Activated CD4-positive, alpha-beta T cell treated with anti-CD3 and anti-CD28 coated beads for 36 hours (primary cell): ENCODE measurements at regions of chr11 and their contacts with region 1.

Region 1: DNA sequence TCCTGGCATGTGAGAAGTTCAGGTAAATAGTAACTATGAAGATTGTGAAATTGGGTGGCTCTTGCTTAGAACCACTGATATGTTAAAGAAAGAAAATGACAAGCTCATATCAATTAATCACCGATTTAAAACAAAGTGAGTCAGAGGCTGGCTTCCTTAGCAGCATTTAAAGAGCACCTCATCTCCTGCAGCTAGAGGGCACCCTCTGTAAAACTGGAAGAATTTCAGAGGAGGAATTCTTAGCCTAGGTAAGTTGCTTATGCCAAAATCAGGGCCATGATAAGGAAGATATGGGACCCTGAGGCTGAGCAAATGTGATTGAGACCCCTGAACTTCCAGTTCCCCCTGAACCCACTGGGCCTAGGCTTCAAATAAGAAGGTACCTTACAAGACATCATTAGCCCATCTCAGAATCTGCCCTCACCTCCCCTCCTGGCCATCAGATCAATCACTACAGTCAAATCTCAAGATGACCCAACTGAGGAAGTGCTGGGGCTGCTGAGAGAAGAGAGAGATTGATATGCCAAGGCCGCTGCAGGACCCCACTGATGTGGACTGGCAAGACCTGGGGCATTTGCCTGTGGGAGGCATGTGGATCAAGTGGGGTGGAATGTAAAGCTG is 8.6 kb upstream of the CD3E start:
- DNase-seq: peak; percentile 62
- ATAC-seq: peak; percentile 85
- H3K4me3 Mint-ChIP-seq: no peak overlapping the region
- H3K27ac Mint-ChIP-seq: peak overlapping the region; percentile 68
- H3K4me1 Mint-ChIP-seq: peaks cover 16% of the 10 kb centered on the region
- H3K27me3 Mint-ChIP-seq: no peaks in the 10 kb centered on the region

Region 2: GRCh38 chr11:118247047-118247446 is 48.9 kb before region 1 on chr11:
- CTCF ChIA-PET with region 1: interaction called, 10 read pairs
- POLR2A ChIA-PET with region 1: no interaction called
- intact Hi-C with region 1: no loop called
- DNase-seq: no peak
- ATAC-seq: peak; percentile 69
- H3K4me3 Mint-ChIP-seq: peak overlapping the region; percentile 11
- H3K27ac Mint-ChIP-seq: peak overlapping the region; percentile 78
- H3K4me1 Mint-ChIP-seq: peaks cover 71% of the 10 kb centered on the region
- H3K27me3 Mint-ChIP-seq: no peaks in the 10 kb centered on the region

Region 3: DNA sequence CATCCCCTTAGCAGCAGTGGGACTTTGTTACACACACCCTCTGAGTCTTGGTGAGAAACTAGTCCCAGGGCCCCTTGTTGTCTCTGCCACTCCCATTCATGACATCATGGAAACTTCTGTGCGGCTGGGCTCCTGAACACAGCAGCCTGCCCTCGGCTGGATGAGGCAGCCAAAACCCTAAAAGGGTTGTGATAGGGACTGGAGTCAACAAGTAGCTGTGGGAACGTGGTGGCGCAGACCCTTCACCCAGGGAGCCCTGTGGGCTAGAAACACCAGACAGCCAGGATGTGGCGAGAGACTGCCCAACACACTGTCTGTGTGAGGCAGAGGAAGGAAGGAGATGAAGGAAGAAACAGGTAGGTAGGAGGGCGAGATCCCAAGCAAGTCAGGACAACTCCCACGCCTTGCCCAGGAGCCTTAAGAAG is 42.7 kb after region 1 on chr11:
- CTCF ChIA-PET with region 1: interaction called, 11 read pairs
- POLR2A ChIA-PET with region 1: interaction called, 4 read pairs
- intact Hi-C with region 1: no loop called
- DNase-seq: peak; percentile 94
- ATAC-seq: peak; percentile 63
- H3K4me3 Mint-ChIP-seq: peak overlapping the region; percentile 83
- H3K27ac Mint-ChIP-seq: peak overlapping the region; percentile 100
- H3K4me1 Mint-ChIP-seq: peaks cover 45% of the 10 kb centered on the region
- H3K27me3 Mint-ChIP-seq: no peaks in the 10 kb centered on the region

Region 4: GRCh38 chr11:118353084-118353710 is 57.3 kb after region 1 on chr11:
- CTCF ChIA-PET with region 1: interaction called, 24 read pairs
- POLR2A ChIA-PET with region 1: no interaction called
- intact Hi-C with region 1: loop called in 1 of 2 experiments (anchors 1 kb)
- DNase-seq: no peak
- ATAC-seq: no peak
- H3K4me3 Mint-ChIP-seq: no peak overlapping the region
- H3K27ac Mint-ChIP-seq: no peak overlapping the region
- H3K4me1 Mint-ChIP-seq: peaks cover 28% of the 10 kb centered on the region
- H3K27me3 Mint-ChIP-seq: no peaks in the 10 kb centered on the region

Region 5: DNA sequence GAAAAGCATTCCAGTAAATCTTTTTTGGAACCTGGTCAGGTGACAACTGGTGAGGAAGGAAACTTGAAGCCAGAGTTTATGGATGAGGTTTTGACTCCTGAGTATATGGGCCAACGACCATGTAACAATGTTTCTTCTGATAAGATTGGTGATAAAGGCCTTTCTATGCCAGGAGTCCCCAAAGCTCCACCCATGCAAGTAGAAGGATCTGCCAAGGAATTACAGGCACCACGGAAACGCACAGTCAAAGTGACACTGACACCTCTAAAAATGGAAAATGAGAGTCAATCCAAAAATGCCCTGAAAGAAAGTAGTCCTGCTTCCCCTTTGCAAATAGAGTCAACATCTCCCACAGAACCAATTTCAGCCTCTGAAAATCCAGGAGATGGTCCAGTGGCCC is 207.3 kb after region 1 on chr11:
- CTCF ChIA-PET with region 1: no interaction called
- POLR2A ChIA-PET with region 1: no interaction called
- intact Hi-C with region 1: no loop called
- DNase-seq: peak; percentile 12
- ATAC-seq: no peak
- H3K4me3 Mint-ChIP-seq: no peak overlapping the region
- H3K27ac Mint-ChIP-seq: peak overlapping the region; percentile 40
- H3K4me1 Mint-ChIP-seq: peaks cover 3% of the 10 kb centered on the region
- H3K27me3 Mint-ChIP-seq: no peaks in the 10 kb centered on the region